MCF 10A (cell line): ENCODE measurements at regions of chr18 and their contacts with region 1.

Region 1: GRCh38 chr18:7789856-7790552 is 222.9 kb downstream of the PTPRM start:
- DNase-seq: peak; percentile 68
- H3K4me3 Mint-ChIP-seq: no peak overlapping the region
- H3K27ac Mint-ChIP-seq: no peak overlapping the region
- H3K4me1 Mint-ChIP-seq: peaks cover 12% of the 10 kb centered on the region
- H3K27me3 Mint-ChIP-seq: no peaks in the 10 kb centered on the region
- CTCF ChIP-seq: peak; percentile 41

Region 2: DNA sequence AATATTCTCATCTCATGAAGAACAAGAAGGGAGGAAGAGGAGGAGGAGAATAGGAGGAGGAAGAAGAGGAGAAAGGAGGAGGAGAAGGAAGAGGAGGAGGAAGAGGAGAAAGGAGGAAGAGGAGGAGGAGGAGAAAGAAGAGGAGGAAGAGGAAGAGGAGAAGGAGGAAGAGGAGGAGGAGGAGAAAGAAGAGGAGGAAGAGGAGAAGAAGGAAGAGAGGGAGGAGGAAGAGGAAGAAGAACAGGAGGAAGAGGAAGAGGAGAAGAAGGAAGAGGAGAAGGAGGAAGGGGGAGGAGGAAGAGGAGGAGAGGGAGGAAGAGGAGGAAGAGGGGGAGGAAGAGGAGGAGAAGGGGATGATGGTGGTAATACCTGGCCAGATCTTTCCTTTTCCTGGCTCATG is 292.9 kb before region 1 on chr18:
- CTCF ChIA-PET with region 1: no interaction called
- POLR2A ChIA-PET with region 1: no interaction called
- intact Hi-C with region 1: no loop called
- DNase-seq: no peak
- H3K4me3 Mint-ChIP-seq: no peak overlapping the region
- H3K27ac Mint-ChIP-seq: no peak overlapping the region
- H3K4me1 Mint-ChIP-seq: no peaks in the 10 kb centered on the region
- H3K27me3 Mint-ChIP-seq: no peaks in the 10 kb centered on the region
- CTCF ChIP-seq: no peak

Region 3: GRCh38 chr18:7711495-7711894 is 78.5 kb before region 1 on chr18:
- CTCF ChIA-PET with region 1: no interaction called
- POLR2A ChIA-PET with region 1: no interaction called
- intact Hi-C with region 1: no loop called
- DNase-seq: no peak
- H3K4me3 Mint-ChIP-seq: no peak overlapping the region
- H3K27ac Mint-ChIP-seq: no peak overlapping the region
- H3K4me1 Mint-ChIP-seq: no peaks in the 10 kb centered on the region
- H3K27me3 Mint-ChIP-seq: no peaks in the 10 kb centered on the region
- CTCF ChIP-seq: no peak

Region 4: GRCh38 chr18:7805880-7806279 is 15.9 kb after region 1 on chr18:
- CTCF ChIA-PET with region 1: interaction called, 11 read pairs
- POLR2A ChIA-PET with region 1: interaction called, 6 read pairs
- intact Hi-C with region 1: no loop called
- DNase-seq: no peak
- H3K4me3 Mint-ChIP-seq: no peak overlapping the region
- H3K27ac Mint-ChIP-seq: no peak overlapping the region
- H3K4me1 Mint-ChIP-seq: no peaks in the 10 kb centered on the region
- H3K27me3 Mint-ChIP-seq: no peaks in the 10 kb centered on the region
- CTCF ChIP-seq: no peak

Region 5: DNA sequence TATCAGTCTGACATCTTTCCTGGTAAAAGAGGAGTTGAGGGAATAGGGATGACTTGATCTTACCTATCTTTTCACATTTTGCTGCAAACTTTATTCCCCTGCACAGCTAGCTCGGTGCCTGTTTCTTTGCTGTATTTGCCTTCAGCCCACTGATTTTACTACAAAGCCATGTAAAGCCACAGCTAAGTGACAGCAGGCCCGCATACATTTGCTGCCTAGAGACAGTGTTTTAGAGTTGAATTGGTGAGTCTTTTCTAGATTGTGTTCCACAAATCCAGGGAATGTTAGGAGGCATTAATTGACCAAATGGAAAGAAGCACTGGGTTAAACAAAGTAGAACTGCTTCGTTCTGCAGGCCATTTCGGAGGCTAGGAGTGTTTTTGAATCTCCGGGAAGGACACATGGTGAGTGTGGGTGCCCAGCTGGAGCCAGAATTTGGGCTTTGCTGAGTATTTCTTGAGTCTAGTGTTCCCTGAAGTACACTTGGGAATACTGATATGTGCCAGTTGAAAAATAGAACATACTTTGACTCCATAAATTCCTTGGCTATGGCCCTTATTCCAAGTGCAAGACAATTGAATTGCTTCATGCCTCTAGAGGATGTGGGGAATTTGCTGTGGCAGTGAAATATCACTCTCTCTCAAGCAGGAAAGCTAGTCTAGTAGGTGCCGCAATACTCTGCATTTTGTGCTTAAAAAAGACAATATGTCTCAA is 107.0 kb after region 1 on chr18:
- CTCF ChIA-PET with region 1: no interaction called
- POLR2A ChIA-PET with region 1: no interaction called
- intact Hi-C with region 1: no loop called
- DNase-seq: no peak
- H3K4me3 Mint-ChIP-seq: no peak overlapping the region
- H3K27ac Mint-ChIP-seq: peak overlapping the region; percentile 48
- H3K4me1 Mint-ChIP-seq: peaks cover 20% of the 10 kb centered on the region
- H3K27me3 Mint-ChIP-seq: no peaks in the 10 kb centered on the region
- CTCF ChIP-seq: no peak

Region 6: DNA sequence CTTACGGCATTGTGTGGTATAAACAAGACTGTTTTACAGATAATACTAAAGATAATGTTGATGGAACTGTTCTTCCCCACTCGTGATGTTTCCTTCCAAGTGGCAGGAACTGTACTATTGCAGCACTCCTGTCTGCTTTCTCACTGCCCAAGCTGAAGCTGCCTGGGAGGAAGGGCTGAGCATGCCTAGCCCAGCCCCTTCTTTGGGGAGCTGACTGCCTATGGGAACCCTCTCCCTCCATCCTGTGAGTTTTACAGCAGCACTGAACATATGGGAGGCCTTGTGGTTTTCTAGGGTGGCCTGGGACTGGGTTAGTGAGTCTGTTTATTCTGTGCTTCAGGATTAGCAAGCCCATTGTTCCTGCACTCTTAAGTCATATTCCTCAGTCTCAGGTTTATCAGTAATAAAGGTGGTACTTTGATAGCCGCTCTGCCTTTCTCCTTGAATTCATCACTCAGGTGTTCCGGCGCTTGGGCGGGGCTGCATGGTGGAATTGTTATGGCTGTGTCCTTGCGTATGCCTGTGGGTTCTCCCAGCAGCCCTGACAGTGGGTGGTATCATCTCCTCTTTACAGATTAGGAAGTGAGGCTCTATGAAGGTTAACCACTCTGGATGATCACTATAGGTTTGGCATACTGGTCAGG is 156.9 kb after region 1 on chr18:
- CTCF ChIA-PET with region 1: no interaction called
- POLR2A ChIA-PET with region 1: interaction called, 3 read pairs
- intact Hi-C with region 1: loop called (anchors 1 kb)
- DNase-seq: peak; percentile 60
- H3K4me3 Mint-ChIP-seq: peak overlapping the region; percentile 66
- H3K27ac Mint-ChIP-seq: peak overlapping the region; percentile 82
- H3K4me1 Mint-ChIP-seq: peaks cover 54% of the 10 kb centered on the region
- H3K27me3 Mint-ChIP-seq: no peaks in the 10 kb centered on the region
- CTCF ChIP-seq: no peak

Region 7: GRCh38 chr18:7958081-7958896 is 168.3 kb after region 1 on chr18:
- CTCF ChIA-PET with region 1: interaction called, 10 read pairs
- POLR2A ChIA-PET with region 1: no interaction called
- intact Hi-C with region 1: no loop called
- DNase-seq: peak; percentile 24
- H3K4me3 Mint-ChIP-seq: peak overlapping the region; percentile 55
- H3K27ac Mint-ChIP-seq: peak overlapping the region; percentile 78
- H3K4me1 Mint-ChIP-seq: peaks cover 37% of the 10 kb centered on the region
- H3K27me3 Mint-ChIP-seq: no peaks in the 10 kb centered on the region
- CTCF ChIP-seq: no peak

Region 8: DNA sequence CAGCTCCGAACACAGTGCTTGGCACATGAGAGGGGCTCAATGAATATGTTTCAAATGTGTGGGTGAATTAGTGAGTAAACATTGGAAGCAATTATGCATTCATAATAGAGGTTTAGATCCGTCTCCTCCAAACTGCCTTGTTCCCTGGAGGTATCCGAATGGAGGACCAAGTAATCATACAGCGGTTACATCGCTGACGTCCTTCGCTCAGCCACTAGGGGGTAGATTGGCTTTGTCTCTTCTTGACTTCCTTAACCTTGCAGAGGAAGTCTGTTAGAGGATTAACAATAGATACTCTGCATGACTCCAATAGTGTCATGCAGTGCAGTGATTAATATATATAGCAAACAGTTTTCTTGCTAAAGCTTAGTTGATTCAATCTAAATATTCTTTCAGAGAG is 294.2 kb after region 1 on chr18:
- CTCF ChIA-PET with region 1: interaction called, 9 read pairs
- POLR2A ChIA-PET with region 1: interaction called, 3 read pairs
- intact Hi-C with region 1: loop called (anchors 10 kb)
- DNase-seq: peak; percentile 71
- H3K4me3 Mint-ChIP-seq: no peak overlapping the region
- H3K27ac Mint-ChIP-seq: no peak overlapping the region
- H3K4me1 Mint-ChIP-seq: no peaks in the 10 kb centered on the region
- H3K27me3 Mint-ChIP-seq: no peaks in the 10 kb centered on the region
- CTCF ChIP-seq: peak; percentile 59

Region 9: GRCh38 chr18:8478166-8478967 is 688.4 kb after region 1 on chr18:
- CTCF ChIA-PET with region 1: interaction called, 12 read pairs
- POLR2A ChIA-PET with region 1: no interaction called
- intact Hi-C with region 1: loop called (anchors 5 kb)
- DNase-seq: peak; percentile 64
- H3K4me3 Mint-ChIP-seq: no peak overlapping the region
- H3K27ac Mint-ChIP-seq: no peak overlapping the region
- H3K4me1 Mint-ChIP-seq: peaks cover 5% of the 10 kb centered on the region
- H3K27me3 Mint-ChIP-seq: peaks cover 45% of the 10 kb centered on the region
- CTCF ChIP-seq: peak; percentile 76